ENCODE measurements at regions of chr17 and their contacts with region 1.

Region 1: DNA sequence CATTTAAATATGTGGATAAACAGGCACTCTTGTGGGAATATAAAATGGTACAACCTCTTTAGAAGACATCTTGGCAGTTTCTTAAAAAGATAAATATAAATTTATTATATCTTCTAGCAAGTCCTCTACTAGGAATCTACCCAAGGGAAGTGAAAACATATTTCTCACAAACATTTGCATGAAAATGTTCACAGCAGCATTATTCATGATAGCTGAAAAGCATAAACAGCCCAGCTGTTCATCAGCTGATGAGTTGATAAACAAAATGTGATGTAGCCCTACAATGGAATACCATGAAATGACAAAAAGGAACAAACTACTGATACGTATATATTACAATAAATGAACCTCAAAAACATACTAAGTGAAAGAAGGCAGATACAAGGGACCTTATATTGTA is 12.0 kb downstream of the DGKE start:
- DNase-seq: no peak
- H3K4me3 ChIP-seq: no peak overlapping the region
- H3K27ac ChIP-seq: no peak overlapping the region
- H3K4me1 ChIP-seq: peaks cover 3 to 7% of the 10 kb centered on the region in 2 experiments; a peak in 2 of 4 replicates
- H3K27me3 ChIP-seq: no peaks in the 10 kb centered on the region
- CTCF ChIP-seq: no peak
- EP300 ChIP-seq: no peak
- RAD21 ChIP-seq: no peak

Region 2: DNA sequence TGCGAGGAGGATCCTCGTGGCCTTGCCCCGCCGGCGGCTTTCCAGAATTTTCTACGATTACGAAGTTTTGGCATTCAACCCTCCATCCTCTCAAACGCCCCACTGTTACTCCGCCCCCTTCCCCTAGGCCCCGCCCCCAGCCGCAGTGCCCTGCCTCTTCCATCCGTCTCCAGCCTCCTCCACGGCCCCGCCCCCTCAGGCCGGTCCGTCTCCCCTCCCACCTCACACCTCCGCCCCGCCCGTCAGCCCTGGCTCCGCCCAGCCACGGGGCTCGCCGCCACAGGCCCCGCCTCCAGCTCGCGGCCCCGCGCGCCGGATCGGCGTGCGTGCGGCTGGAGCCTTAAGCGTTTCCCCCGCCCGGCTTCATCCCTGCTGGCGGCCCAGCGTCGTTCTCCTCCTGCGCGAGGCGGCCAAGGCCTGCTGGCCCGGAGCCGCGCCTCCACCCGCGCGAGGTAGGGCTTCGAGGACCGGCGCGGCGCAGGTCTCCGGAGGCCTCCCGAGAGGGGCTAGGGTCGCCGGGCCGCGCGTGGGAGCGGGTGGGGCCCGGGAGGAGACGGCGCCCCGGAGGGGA is 12.0 kb before region 1 on chr17 and contains the starts of genes C17orf67 and DGKE:
- CTCF ChIA-PET with region 1: interaction called, 16 read pairs
- POLR2A ChIA-PET with region 1: no interaction called
- DNase-seq: peak; percentile 100
- H3K4me3 ChIP-seq: peak within 1 kb of the TSS; percentile 66 to 74
- H3K27ac ChIP-seq: peak within 1 kb of the TSS; percentile 66
- H3K4me1 ChIP-seq: peaks cover 9 to 21% of the 10 kb centered on the region in 2 experiments; a peak in 3 of 4 replicates
- H3K27me3 ChIP-seq: no peaks in the 10 kb centered on the region
- CTCF ChIP-seq: no peak
- EP300 ChIP-seq: no peak; a peak in 1 of 4 replicates
- RAD21 ChIP-seq: no peak
- polyA plus RNA-seq, gene C17orf67: 1.6 and 1.7 TPM in 2 replicates
- polyA plus RNA-seq, gene DGKE: 2.4 and 2.8 TPM in 2 replicates